Tibial artery (tissue), 4 donors: ENCODE measurements at regions of chr19 and their contacts with region 1.

Region 1: DNA sequence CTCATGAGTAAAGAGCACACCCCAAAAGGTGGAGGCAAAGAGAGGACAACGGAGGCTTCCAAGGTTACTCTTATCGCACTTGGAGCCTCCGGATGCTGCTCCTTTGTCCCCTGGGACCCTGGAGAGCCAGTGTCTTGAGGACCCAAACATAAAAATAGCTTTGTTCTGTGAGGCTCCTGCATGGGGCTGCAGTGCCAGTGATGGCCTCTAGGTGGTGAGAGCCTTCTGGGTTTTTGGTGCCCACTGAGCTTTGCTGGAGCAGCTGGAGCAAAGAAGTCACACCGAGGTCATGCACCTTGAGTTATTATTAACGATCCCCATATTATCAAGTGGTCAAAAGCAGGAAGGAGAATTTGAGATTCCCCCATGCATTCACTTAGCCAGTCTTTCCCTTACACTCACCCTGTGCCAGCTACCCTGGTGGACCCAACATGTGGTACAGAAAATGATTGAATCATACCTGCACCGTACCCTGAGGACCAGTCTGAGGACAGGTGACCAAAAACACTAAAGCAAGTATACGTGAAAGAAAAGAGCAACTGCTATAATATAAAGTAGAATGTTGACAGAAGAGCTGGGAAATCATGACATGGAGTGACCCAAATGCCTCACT is 41.5 kb downstream of the ZNF682 start:
- DNase-seq: no peak
- H3K4me3 ChIP-seq: no peak overlapping the region
- H3K27ac ChIP-seq: no peak overlapping the region
- H3K4me1 ChIP-seq: no peaks in the 10 kb centered on the region
- H3K27me3 ChIP-seq: no peaks in the 10 kb centered on the region
- CTCF ChIP-seq: peak; percentile 20 to 43

Region 2: DNA sequence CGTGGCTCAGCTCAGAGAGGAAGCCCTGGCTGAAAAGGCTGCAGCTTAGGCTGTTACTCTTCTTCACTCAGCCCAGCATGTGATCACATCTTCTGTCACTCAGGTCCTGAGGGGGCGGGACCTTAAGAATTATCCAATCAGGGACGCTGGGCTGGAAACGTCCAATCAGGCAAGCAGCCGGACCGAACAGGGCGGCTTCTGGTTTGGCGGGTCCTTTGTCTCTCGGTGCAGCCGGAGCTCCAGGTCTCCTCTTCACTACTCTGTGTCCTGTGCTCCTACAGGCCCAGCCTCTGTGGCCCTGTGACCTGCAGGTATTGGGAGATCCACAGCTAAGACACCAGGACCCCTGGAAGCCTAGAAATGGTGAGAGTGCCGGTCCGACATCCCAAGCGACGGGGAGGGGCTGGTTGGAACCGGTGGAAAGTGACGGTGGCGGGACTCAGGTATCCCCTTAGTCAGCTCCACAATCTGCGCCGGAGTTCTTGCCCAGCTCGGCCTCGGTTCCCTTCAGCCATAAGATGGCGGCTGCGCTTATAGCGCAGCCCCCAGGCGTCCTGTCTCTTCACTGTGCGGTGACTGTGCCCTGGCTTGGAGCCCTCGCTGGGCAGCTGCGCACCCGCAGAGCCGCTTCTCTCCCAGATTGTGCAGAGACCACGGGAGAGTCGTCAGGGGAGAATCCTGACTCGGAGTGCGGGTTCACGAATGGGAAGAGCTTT is 96.9 kb before region 1 on chr19 and contains the start of gene ZNF93:
- intact Hi-C with region 1: no loop called
- DNase-seq: peak; percentile 97
- H3K4me3 ChIP-seq: peak within 1 kb of the TSS; percentile 74 to 76
- H3K27ac ChIP-seq: peak within 1 kb of the TSS; percentile 71 to 87
- H3K4me1 ChIP-seq: peaks cover 0 to 11% (median 0%) of the 10 kb centered on the region in 4 donors
- H3K27me3 ChIP-seq: no peaks in the 10 kb centered on the region
- CTCF ChIP-seq: no peak

Region 3: DNA sequence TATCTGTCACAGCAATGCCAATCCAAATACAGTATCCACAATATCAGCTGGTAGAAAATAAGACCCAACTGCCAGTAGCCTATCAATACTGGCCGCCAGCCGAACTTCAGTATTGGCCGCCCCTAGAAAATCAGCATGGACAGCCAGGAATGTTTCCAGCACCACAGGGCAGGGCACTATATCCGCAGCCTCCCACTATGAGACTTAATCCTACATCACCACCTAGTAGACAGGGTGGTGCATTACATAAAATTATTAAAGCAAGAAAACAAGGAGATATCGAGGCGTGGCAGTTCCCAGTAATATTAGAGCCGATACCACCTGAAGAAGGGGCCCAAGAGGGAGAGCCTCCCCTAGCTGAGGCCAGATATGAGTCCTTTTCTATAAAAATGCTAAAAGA is 280.6 kb after region 1 on chr19:
- intact Hi-C with region 1: loop called (anchors 10 kb)
- DNase-seq: no peak
- H3K4me3 ChIP-seq: no peak overlapping the region
- H3K27ac ChIP-seq: no peak overlapping the region
- H3K4me1 ChIP-seq: peaks cover 0 to 6% (median 0%) of the 10 kb centered on the region in 4 donors
- H3K27me3 ChIP-seq: no peaks in the 10 kb centered on the region
- CTCF ChIP-seq: no peak